ENCODE measurements at regions of chr15 and their contacts with region 1.

Region 1: DNA sequence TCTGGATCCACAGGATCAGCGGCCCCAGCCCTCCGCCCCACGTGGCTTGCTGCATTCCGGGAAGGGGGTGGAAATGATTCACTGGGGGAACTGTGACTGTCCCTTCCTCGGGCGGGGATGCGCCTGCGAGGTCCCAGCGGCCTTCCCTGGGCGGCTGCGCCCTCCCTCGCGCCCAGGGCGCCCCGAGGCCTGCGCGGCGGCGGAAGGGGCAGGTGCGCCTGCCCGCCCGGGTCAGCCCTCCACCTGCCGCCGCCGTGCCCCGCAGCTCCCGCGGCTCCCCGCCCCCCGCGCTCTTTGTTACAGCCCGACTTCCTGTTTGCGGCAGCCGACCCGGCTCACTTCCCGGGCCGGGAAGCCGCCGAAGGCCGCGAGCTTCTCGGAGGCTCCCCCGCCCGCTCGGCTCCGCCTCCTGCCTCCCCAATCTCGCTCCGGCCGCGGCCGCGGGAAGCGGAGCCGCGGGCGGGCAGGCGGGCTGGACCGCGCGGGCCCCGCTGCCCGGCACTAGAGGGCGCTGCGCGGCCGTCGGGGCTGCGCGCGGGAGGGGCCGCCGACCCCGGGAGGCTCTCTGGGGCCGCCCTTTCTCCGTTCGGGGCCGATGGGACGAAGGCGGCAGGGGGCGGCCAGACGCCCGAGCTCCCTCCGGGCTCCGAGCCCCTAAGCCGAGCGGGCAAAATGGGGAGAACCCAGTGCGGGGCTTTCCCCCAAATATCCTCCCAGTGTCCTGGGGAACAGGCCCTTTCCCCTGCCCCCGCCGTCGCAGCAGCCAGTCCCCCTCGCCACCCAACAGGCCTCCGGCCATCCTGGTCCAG is 11.5 kb upstream of the CHAC1 start:
- DNase-seq: peak; percentile 91
- CTCF ChIP-seq: peak; percentile 93

Region 2: GRCh38 chr15:40857601-40858341 is 84.0 kb before region 1 on chr15:
- CTCF ChIA-PET with region 1: interaction called, 13 read pairs
- POLR2A ChIA-PET with region 1: no interaction called
- DNase-seq: peak; percentile 89
- CTCF ChIP-seq: peak; percentile 97

Region 3: DNA sequence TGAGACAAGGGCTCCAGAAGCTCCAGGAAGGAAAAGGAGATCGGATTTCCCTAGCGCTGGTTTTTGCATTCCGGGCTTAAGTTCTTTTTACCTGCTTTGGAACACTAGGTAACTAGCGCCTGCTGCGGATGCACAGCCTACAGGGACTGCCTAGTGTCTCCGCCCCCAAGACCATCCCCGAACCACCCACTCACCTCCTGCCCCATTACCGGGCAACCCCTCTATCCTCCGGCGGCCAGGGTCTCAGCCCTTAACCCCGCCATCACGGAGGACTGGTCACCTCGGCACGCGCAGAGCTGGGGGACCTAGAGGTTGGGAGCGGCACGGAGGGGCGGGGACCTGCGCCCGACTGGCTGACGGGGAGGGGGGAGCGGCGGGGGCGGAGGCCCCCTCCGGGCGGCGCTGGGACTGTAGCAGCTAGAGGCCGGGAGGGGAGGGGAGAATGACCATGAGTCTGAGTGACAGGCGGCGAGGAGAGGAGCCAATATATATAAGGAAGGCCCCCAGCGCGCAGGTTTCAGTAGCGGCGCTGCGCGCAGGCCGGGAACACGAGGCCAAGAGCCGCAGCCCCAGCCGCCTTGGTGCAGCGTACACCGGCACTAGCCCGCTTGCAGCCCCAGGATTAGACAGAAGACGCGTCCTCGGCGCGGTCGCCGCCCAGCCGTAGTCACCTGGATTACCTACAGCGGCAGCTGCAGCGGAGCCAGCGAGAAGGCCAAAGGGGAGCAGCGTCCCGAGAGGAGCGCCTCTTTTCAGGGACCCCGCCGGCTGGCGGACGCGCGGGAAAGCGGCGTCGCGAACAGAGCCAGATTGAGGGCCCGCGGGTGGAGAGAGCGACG is 12.7 kb before region 1 on chr15 and contains the start of gene DLL4:
- CTCF ChIA-PET with region 1: interaction called, 167 read pairs
- POLR2A ChIA-PET with region 1: interaction called, 4 read pairs
- DNase-seq: peak; percentile 63
- CTCF ChIP-seq: no peak

Region 4: GRCh38 chr15:40960926-40961325 is 19.2 kb after region 1 on chr15:
- CTCF ChIA-PET with region 1: interaction called, 31 read pairs
- POLR2A ChIA-PET with region 1: no interaction called
- DNase-seq: no peak
- CTCF ChIP-seq: no peak

Region 5: GRCh38 chr15:40982855-40983254 is 41.1 kb after region 1 on chr15:
- CTCF ChIA-PET with region 1: interaction called, 11 read pairs
- POLR2A ChIA-PET with region 1: no interaction called
- DNase-seq: no peak
- CTCF ChIP-seq: no peak

Region 6: DNA sequence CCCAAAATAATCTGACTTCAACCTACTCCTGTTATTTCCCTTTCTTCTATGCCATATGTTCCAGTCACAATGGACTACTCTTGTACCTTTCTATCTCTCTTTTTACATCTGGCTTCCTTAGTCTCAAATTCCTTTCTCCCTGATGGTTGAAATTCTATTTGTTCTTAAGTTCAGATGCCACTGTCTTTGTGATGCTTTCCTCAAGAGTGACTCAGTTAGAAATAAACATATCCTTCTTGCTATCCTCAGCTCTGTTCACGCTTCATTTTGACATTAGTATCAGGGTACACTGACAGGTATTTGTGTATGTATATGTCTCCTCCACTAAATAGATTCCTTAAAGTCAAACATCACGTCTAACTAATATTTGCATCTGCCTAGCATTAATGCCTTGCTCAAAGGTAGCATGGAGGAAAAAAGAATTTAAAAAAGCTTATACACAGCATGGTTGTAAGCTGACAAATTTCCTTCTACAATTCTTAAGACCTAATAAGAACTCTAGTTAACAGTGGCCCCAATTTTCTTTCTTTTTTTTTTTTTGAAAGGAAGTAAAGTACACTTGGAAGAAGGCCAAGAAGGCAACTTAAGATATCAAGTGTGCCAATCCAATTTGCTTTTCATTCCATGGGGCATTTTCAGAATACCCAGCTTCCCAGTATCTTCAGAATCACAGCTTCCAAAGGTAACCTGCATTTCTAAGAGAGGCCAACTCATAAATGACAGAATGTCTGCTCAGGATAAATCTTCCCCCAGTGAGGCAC is 69.5 kb after region 1 on chr15:
- CTCF ChIA-PET with region 1: interaction called, 53 read pairs
- POLR2A ChIA-PET with region 1: no interaction called
- DNase-seq: no peak
- CTCF ChIP-seq: no peak

Region 7: GRCh38 chr15:41180206-41180789 is 238.6 kb after region 1 on chr15:
- CTCF ChIA-PET with region 1: interaction called, 24 read pairs
- POLR2A ChIA-PET with region 1: no interaction called
- DNase-seq: no peak
- CTCF ChIP-seq: no peak